GM12878 (cell line): ENCODE measurements at regions of chr6 and their contacts with region 1.

Region 1: DNA sequence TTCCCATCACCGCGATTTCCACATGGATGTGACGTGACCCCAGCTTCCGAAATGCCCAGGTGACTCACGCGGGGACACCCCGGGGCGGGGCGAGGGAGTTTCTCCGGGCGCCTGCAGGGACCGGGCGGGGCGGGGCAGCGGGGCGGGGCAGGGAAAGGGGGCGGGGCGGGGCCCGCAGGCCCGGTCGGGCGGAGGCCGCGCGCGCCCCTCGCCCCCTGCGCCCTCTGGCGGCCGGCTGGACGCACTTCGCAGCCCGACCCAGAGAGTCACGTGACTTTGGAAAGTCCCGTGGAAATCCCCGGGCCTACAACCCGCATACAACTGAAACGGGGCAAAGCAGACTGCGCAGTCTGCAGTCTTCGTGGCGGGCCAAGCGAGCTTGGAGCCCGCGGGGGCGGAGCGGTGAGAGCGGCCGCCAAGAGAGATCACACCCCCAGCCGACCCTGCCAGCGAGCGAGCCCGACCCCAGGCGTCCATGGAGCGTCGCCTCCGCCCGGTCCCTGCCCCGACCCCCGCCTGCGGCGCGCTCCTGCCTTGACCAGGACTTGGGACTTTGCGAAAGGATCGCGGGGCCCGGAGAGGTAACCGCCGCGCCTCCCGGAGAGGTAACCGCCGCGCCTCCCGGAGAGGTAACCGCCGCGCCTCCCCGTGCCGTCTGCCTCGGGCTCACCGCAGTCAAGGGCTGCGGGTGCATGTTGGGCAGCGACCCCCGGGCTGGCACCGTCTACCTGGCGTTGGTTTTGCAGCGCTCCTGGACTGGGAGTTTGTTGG is at the start of gene TNFAIP3:
- DNase-seq: peak; percentile 84
- ATAC-seq: peak; percentile 78
- H3K4me3 ChIP-seq: peak within 1 kb of the TSS; percentile 99
- H3K27ac ChIP-seq: peak within 1 kb of the TSS; percentile 72
- H3K4me1 ChIP-seq: peaks cover 5% of the 10 kb centered on the region; the same call in 1 of the 2 replicates
- H3K27me3 ChIP-seq: no peaks in the 10 kb centered on the region
- CTCF ChIP-seq: peak; percentile 63 to 83 (median 70)
- EP300 ChIP-seq: peak; percentile 64 to 90
- POLR2A ChIP-seq: peak; percentile 95
- RAD21 ChIP-seq: peak; percentile 73
- polyA plus RNA-seq, gene TNFAIP3: 18.0 to 31.5 TPM

Region 2: GRCh38 chr6:137744877-137745276 is 122.2 kb before region 1 on chr6:
- CTCF ChIA-PET with region 1: interaction called, 5 read pairs
- POLR2A ChIA-PET with region 1: interaction called, 4 read pairs
- RAD21 ChIA-PET with region 1: interaction called, 17 read pairs
- SMC1A ChIA-PET with region 1: interaction called, 5 read pairs
- in situ Hi-C with region 1: no loop called
- intact Hi-C with region 1: no loop called
- DNase-seq: peak; percentile 75
- ATAC-seq: peak; percentile 79
- H3K4me3 ChIP-seq: peak overlapping the region; percentile 29; the same call in 1 of the 2 replicates
- H3K27ac ChIP-seq: peak overlapping the region; percentile 34; the same call in 1 of the 2 replicates
- H3K4me1 ChIP-seq: peaks cover 36% of the 10 kb centered on the region
- H3K27me3 ChIP-seq: no peaks in the 10 kb centered on the region
- CTCF ChIP-seq: no peak
- EP300 ChIP-seq: peak; percentile 25 to 28; a peak in 2 of 4 replicates
- POLR2A ChIP-seq: no peak
- RAD21 ChIP-seq: no peak

Region 3: GRCh38 chr6:137799950-137800568 is 67.0 kb before region 1 on chr6:
- CTCF ChIA-PET with region 1: interaction called, 149 read pairs
- POLR2A ChIA-PET with region 1: interaction called, 15 read pairs
- RAD21 ChIA-PET with region 1: interaction called, 117 read pairs
- SMC1A ChIA-PET with region 1: interaction called, 314 read pairs
- in situ Hi-C with region 1: loop called (anchors 5 kb)
- intact Hi-C with region 1: loop called (anchors 1 kb)
- DNase-seq: no peak
- ATAC-seq: peak; percentile 96
- H3K4me3 ChIP-seq: no peak overlapping the region
- H3K27ac ChIP-seq: no peak overlapping the region
- H3K4me1 ChIP-seq: peaks cover 19% of the 10 kb centered on the region
- H3K27me3 ChIP-seq: no peaks in the 10 kb centered on the region
- CTCF ChIP-seq: peak; percentile 67 to 78 (median 70)
- EP300 ChIP-seq: no peak
- POLR2A ChIP-seq: no peak
- RAD21 ChIP-seq: peak; percentile 88

Region 4: GRCh38 chr6:137832110-137832509 is 35.0 kb before region 1 on chr6:
- CTCF ChIA-PET with region 1: interaction called, 7 read pairs
- POLR2A ChIA-PET with region 1: interaction called, 11 read pairs
- RAD21 ChIA-PET with region 1: interaction called, 14 read pairs
- SMC1A ChIA-PET with region 1: interaction called, 83 read pairs
- in situ Hi-C with region 1: no loop called
- intact Hi-C with region 1: loop called (anchors 2 kb)
- DNase-seq: no peak
- ATAC-seq: no peak
- H3K4me3 ChIP-seq: no peak overlapping the region
- H3K27ac ChIP-seq: no peak overlapping the region
- H3K4me1 ChIP-seq: peaks cover 42% of the 10 kb centered on the region
- H3K27me3 ChIP-seq: no peaks in the 10 kb centered on the region
- CTCF ChIP-seq: no peak
- EP300 ChIP-seq: no peak
- POLR2A ChIP-seq: no peak
- RAD21 ChIP-seq: no peak

Region 5: DNA sequence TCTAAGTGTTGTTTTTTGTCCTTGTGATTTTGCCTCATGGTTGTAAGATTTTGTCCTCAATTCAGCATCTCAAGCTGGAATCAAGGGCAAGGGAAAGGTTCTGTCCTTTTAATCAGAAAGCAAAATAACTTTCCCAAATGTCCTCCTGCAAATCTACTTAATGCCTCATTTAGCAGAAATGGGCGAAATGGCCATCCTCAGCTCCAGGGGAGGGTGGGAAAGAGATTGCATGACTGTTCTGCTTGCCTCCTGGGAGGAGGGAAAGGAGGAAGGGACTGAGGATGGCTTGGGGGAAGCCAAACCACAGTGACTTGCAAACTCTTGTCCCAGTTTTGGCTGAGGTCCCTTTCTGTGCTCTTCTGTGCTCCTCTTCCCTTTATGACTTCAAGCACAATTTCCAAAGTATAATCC is 43.3 kb after region 1 on chr6:
- CTCF ChIA-PET with region 1: interaction called, 64 read pairs
- POLR2A ChIA-PET with region 1: interaction called, 36 read pairs
- RAD21 ChIA-PET with region 1: interaction called, 62 read pairs
- SMC1A ChIA-PET with region 1: interaction called, 112 read pairs
- in situ Hi-C with region 1: no loop called
- intact Hi-C with region 1: no loop called
- DNase-seq: no peak
- ATAC-seq: no peak
- H3K4me3 ChIP-seq: no peak overlapping the region
- H3K27ac ChIP-seq: peak overlapping the region; percentile 95
- H3K4me1 ChIP-seq: peaks cover 48% of the 10 kb centered on the region
- H3K27me3 ChIP-seq: no peaks in the 10 kb centered on the region
- CTCF ChIP-seq: no peak
- EP300 ChIP-seq: no peak
- POLR2A ChIP-seq: no peak
- RAD21 ChIP-seq: no peak

Region 6: DNA sequence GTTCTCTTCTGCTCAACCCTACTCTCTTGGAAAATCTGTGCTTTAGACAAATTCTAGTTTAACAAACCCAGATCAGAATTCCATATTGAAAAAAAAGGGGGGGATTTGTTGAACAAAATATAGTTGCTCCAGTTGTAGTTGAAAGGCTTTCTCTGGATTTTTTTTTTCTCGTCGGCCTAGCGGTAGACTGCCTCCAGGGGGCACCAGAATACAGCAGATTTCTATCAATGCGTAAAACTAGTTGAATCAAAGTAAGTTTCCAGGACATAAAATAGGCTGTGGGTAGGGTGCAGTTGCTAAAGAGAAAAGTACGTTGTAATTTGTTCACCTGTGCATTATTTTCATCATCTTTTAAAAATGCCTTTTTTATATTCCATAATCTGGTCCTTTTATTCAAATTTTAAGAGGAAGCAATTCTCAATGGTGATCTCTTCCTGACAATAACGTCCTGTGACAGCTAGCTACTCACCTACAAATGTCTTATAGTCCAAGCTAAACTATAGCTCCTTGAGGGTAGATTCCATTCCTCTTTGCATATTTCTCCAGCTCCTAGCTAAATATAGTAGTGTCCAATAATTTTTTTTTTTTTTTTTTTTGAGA is 134.8 kb after region 1 on chr6:
- CTCF ChIA-PET with region 1: interaction called, 106 read pairs
- POLR2A ChIA-PET with region 1: interaction called, 3 read pairs
- RAD21 ChIA-PET with region 1: interaction called, 35 read pairs
- SMC1A ChIA-PET with region 1: interaction called, 50 read pairs
- in situ Hi-C with region 1: no loop called
- intact Hi-C with region 1: no loop called
- DNase-seq: no peak
- ATAC-seq: peak; percentile 62
- H3K4me3 ChIP-seq: no peak overlapping the region
- H3K27ac ChIP-seq: no peak overlapping the region
- H3K4me1 ChIP-seq: no peaks in the 10 kb centered on the region
- H3K27me3 ChIP-seq: no peaks in the 10 kb centered on the region
- CTCF ChIP-seq: peak; percentile 73 to 91 (median 85)
- EP300 ChIP-seq: no peak
- POLR2A ChIP-seq: no peak
- RAD21 ChIP-seq: peak; percentile 89